ENCODE measurements at regions of chr17 and their contacts with region 1.

Region 1: DNA sequence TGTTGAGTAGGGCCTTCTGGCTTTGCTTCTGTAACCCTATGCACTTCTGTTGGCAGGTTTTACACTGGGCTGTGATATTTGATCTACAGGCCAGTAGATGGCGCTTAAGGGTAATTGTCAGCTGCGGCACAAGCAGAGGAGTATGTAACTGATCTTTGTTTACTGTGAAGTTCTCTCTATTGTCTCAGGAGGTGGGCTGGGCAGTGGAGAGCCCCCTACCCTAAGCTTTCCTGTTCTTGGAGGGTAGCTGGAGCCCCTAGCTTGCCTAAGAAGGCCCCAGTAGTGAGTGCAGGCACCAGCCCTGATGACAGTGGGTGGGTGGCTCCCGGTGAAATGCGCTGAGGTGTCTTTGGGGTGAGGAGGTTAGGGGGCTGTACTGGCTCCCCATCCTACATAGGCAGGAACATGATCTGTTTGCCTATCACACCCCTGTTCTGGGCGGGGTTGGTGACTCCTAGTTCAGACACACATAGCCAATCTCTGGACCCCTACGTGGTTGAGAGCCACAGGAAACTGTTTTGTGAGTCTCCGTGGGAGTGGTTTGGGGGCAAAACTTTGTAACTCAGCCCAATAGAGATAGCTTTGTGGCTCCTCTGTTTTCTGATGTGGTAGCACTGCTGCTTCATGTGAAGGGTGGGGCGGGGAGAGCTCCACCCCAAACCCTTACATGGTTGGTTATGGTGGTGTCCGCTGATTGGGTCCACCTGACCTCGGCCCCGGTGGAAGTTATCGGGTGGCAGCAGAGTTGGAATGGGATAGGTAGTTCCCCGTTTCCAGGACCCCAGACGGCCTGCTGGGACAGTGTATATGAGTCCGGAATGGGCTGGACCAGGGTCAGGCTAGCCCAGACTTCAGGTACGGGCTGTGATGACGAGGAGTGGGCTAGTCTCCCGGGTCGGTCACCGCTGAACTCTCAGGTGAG is 60.4 kb downstream of the SLFN11 start:
- DNase-seq: no peak
- H3K4me3 ChIP-seq: no peak overlapping the region
- H3K27me3 ChIP-seq: peaks cover 2% of the 10 kb centered on the region; the same call in 1 of the 2 replicates
- CTCF ChIP-seq: peak; percentile 79

Region 2: DNA sequence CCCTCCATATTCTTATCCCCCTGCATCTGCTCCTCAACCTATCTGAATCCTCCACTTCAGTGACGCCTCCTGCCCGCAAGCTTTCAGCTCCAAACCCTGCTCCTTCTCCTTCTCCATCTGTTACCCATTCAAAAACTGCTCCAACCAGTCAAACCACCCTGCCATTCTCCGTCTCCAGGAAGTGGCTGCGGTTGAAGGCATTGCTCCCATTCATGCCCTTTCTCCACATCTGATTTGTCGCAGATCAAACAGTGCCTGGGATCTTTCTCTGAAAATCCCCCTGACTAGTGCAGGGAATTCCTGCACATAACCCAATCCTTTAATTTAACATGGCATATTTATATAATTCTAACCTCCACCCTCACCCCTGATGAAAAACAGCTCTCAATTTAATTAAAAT is 13.9 kb before region 1 on chr17:
- CTCF ChIA-PET with region 1: interaction called, 34 read pairs
- POLR2A ChIA-PET with region 1: no interaction called
- DNase-seq: no peak
- H3K4me3 ChIP-seq: no peak overlapping the region
- H3K27me3 ChIP-seq: no peaks in the 10 kb centered on the region
- CTCF ChIP-seq: no peak

Region 3: GRCh38 chr17:35540589-35541404 is 227.7 kb after region 1 on chr17:
- CTCF ChIA-PET with region 1: interaction called, 195 read pairs
- POLR2A ChIA-PET with region 1: no interaction called
- DNase-seq: no peak
- H3K4me3 ChIP-seq: no peak overlapping the region
- H3K27me3 ChIP-seq: no peaks in the 10 kb centered on the region
- CTCF ChIP-seq: no peak